B cell (primary cell): ENCODE measurements at regions of chr13 and their contacts with region 1.

Region 1: GRCh38 chr13:102596147-102597028 is at the start of gene TPP2:
- DNase-seq: peak; percentile 97
- ATAC-seq: peak; percentile 89
- H3K4me3 ChIP-seq: peak within 1 kb of the TSS; percentile 83 to 99 (median 91)
- H3K4me3 Mint-ChIP-seq: peak within 1 kb of the TSS; percentile 100
- H3K27ac ChIP-seq: peak within 1 kb of the TSS; percentile 97 to 100
- H3K27ac Mint-ChIP-seq: peak within 1 kb of the TSS; percentile 100
- H3K4me1 ChIP-seq: peaks cover 24 to 26% of the 10 kb centered on the region in 2 donors
- H3K4me1 Mint-ChIP-seq: peaks cover 63% of the 10 kb centered on the region
- H3K27me3 ChIP-seq: no peaks in the 10 kb centered on the region
- H3K27me3 Mint-ChIP-seq: no peaks in the 10 kb centered on the region
- CTCF ChIP-seq: no peak
- total RNA-seq, gene TPP2: 51.1 and 56.6 TPM in 2 replicates

Region 2: GRCh38 chr13:102394158-102395053 is 202.0 kb before region 1 on chr13:
- CTCF ChIA-PET with region 1: no interaction called
- POLR2A ChIA-PET with region 1: interaction called, 3 read pairs
- intact Hi-C with region 1: loop called (anchors 1 kb)
- DNase-seq: peak; percentile 95
- ATAC-seq: peak; percentile 90
- H3K4me3 ChIP-seq: peak overlapping the region; percentile 41 to 93 (median 73)
- H3K4me3 Mint-ChIP-seq: peak overlapping the region; percentile 91
- H3K27ac ChIP-seq: peak overlapping the region in 1 of 2 donors; percentile 29
- H3K27ac Mint-ChIP-seq: peak overlapping the region; percentile 71
- H3K4me1 ChIP-seq: peaks cover 4 to 13% of the 10 kb centered on the region in 2 donors
- H3K4me1 Mint-ChIP-seq: peaks cover 6% of the 10 kb centered on the region
- H3K27me3 ChIP-seq: peaks cover 0 to 22% (median 4%) of the 10 kb centered on the region in 4 experiments
- H3K27me3 Mint-ChIP-seq: peaks cover 19% of the 10 kb centered on the region
- CTCF ChIP-seq: no peak

Region 3: GRCh38 chr13:102620516-102620915 is 24.1 kb after region 1 on chr13:
- CTCF ChIA-PET with region 1: interaction called, 10 read pairs
- POLR2A ChIA-PET with region 1: no interaction called
- intact Hi-C with region 1: no loop called
- DNase-seq: no peak
- ATAC-seq: no peak
- H3K4me3 ChIP-seq: no peak overlapping the region
- H3K4me3 Mint-ChIP-seq: no peak overlapping the region
- H3K27ac ChIP-seq: no peak overlapping the region
- H3K27ac Mint-ChIP-seq: no peak overlapping the region
- H3K4me1 ChIP-seq: no peaks in the 10 kb centered on the region
- H3K4me1 Mint-ChIP-seq: no peaks in the 10 kb centered on the region
- H3K27me3 ChIP-seq: no peaks in the 10 kb centered on the region
- H3K27me3 Mint-ChIP-seq: no peaks in the 10 kb centered on the region
- CTCF ChIP-seq: no peak

Region 4: GRCh38 chr13:102773441-102774215 is 177.2 kb after region 1 on chr13 and contains the start of gene TEX30:
- CTCF ChIA-PET with region 1: interaction called, 4 read pairs
- POLR2A ChIA-PET with region 1: interaction called, 10 read pairs
- intact Hi-C with region 1: loop called (anchors 1 kb)
- DNase-seq: peak; percentile 92
- ATAC-seq: peak; percentile 95
- H3K4me3 ChIP-seq: peak within 1 kb of the TSS; percentile 61 to 96 (median 87)
- H3K4me3 Mint-ChIP-seq: peak within 1 kb of the TSS; percentile 93
- H3K27ac ChIP-seq: peak within 1 kb of the TSS; percentile 71 to 85
- H3K27ac Mint-ChIP-seq: peak within 1 kb of the TSS; percentile 95
- H3K4me1 ChIP-seq: peaks cover 7 to 16% of the 10 kb centered on the region in 2 donors
- H3K4me1 Mint-ChIP-seq: peaks cover 13% of the 10 kb centered on the region
- H3K27me3 ChIP-seq: no peaks in the 10 kb centered on the region
- H3K27me3 Mint-ChIP-seq: no peaks in the 10 kb centered on the region
- CTCF ChIP-seq: no peak
- total RNA-seq, gene TEX30: 5.3 and 5.9 TPM in 2 replicates

Region 5: DNA sequence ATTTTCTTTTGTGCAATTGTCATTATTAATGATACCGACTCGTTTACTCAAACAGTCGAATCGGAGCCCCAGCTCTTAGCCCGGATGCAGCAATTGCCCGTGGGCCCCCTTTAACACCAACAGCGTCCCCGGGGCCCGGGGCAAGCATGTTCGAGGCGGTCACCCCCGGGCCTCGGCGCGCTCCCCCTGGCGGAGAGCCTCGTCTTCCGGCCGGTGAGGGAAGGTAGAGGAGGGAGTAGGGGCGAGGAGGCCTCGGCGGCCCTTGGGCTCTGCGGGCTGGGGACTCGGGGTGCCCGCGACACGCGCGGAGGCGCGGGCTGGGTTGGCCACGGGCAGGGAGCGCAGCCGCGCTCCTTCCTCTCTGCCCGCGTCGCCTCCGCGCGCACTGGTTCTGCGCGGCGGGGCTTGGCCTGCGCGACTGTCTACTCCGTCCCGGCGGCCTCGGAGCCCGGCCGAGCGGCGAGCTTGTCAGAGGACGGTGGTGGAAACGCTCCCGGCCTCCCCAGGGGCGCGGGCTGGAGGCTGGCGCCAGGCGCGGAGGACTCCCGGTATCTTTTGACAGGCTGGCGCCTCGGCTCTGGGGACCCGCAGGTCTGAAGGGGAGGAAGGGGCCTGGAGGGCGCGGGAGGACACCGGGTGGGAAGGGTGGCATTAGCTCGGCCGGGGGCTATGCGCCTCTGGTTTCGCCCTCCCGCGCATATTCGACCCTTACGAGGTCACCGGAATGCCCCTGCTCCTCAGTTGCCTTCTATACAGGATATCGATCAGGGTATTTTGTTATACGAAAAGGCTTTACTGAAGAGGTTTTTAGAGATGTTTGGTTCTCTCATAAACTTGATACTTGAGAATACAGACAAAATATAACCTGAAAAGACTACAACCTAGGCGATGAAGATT is 204.0 kb after region 1 on chr13:
- CTCF ChIA-PET with region 1: interaction called, 15 read pairs
- POLR2A ChIA-PET with region 1: interaction called, 7 read pairs
- intact Hi-C with region 1: loop called (anchors 1 kb)
- DNase-seq: peak; percentile 84
- ATAC-seq: peak; percentile 90
- H3K4me3 ChIP-seq: peak overlapping the region; percentile 45 to 68 (median 53)
- H3K4me3 Mint-ChIP-seq: peak overlapping the region; percentile 84
- H3K27ac ChIP-seq: peak overlapping the region in 1 of 2 donors; percentile 49
- H3K27ac Mint-ChIP-seq: peak overlapping the region; percentile 32
- H3K4me1 ChIP-seq: peaks cover 24% of the 10 kb centered on the region in 2 donors
- H3K4me1 Mint-ChIP-seq: peaks cover 28% of the 10 kb centered on the region
- H3K27me3 ChIP-seq: peaks cover 0 to 18% (median 11%) of the 10 kb centered on the region in 4 experiments
- H3K27me3 Mint-ChIP-seq: peaks cover 8% of the 10 kb centered on the region
- CTCF ChIP-seq: peak; percentile 66

Region 6: DNA sequence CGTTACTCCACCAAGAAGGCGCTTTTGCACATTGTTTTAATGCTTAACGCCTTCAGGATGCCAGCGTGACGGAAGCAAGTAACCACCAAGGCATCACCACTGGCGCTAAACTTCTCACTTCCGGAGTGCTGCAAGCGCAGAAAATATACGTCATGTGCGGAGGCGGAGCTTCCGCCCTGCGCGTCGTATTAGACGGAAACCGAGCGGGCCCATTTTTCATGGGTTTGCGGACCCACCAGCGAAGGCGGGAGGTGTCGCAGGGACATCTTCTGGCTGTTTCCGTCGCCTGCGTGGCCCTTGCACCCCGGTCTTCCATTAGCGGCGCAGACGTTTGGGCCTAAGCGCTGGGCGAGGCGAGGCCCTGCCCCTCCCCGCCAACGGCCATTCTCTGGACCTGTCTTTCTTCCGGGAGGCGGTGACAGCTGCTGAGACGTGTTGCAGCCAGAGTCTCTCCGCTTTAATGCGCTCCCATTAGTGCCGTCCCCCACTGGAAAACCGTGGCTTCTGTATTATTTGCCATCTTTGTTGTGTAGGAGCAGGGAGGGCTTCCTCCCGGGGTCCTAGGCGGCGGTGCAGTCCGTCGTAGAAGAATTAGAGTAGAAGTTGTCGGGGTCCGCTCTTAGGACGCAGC is 249.4 kb after region 1 on chr13 and contains the start of gene ERCC5:
- CTCF ChIA-PET with region 1: interaction called, 63 read pairs
- POLR2A ChIA-PET with region 1: interaction called, 116 read pairs
- intact Hi-C with region 1: loop called (anchors 1 kb)
- DNase-seq: peak; percentile 99
- ATAC-seq: peak; percentile 74
- H3K4me3 ChIP-seq: peak within 1 kb of the TSS; percentile 91 to 100 (median 99)
- H3K4me3 Mint-ChIP-seq: peak within 1 kb of the TSS; percentile 91
- H3K27ac ChIP-seq: peak within 1 kb of the TSS; percentile 96 to 97
- H3K27ac Mint-ChIP-seq: peak within 1 kb of the TSS; percentile 98
- H3K4me1 ChIP-seq: peaks cover 21 to 25% of the 10 kb centered on the region in 2 donors
- H3K4me1 Mint-ChIP-seq: peaks cover 32% of the 10 kb centered on the region
- H3K27me3 ChIP-seq: no peaks in the 10 kb centered on the region
- H3K27me3 Mint-ChIP-seq: no peaks in the 10 kb centered on the region
- CTCF ChIP-seq: no peak
- total RNA-seq, gene ERCC5: 88.3 and 100 TPM in 2 replicates